AG04450 (cell line): ENCODE measurements at regions of chr2 and their contacts with region 1.

Region 1: GRCh38 chr2:62456721-62457539 is 49.1 kb downstream of the TMEM17 start:
- DNase-seq: no peak
- H3K4me3 ChIP-seq: peak overlapping the region; percentile 67
- H3K27ac ChIP-seq: peak overlapping the region; percentile 52
- H3K27me3 ChIP-seq: peaks cover 3% of the 10 kb centered on the region
- CTCF ChIP-seq: peak; percentile 84

Region 2: GRCh38 chr2:62467475-62468321 is 10.8 kb after region 1 on chr2:
- CTCF ChIA-PET with region 1: interaction called, 21 read pairs
- POLR2A ChIA-PET with region 1: no interaction called
- DNase-seq: no peak
- H3K4me3 ChIP-seq: no peak overlapping the region
- H3K27ac ChIP-seq: no peak overlapping the region
- H3K27me3 ChIP-seq: peaks cover 3% of the 10 kb centered on the region
- CTCF ChIP-seq: 0 out of 2 replicates have a peak, but pooled peaks have one; percentile 8

Region 3: GRCh38 chr2:62663920-62664795 is 207.2 kb after region 1 on chr2:
- CTCF ChIA-PET with region 1: interaction called, 10 read pairs
- POLR2A ChIA-PET with region 1: interaction called, 11 read pairs
- DNase-seq: peak; percentile 43
- H3K4me3 ChIP-seq: no peak overlapping the region
- H3K27ac ChIP-seq: no peak overlapping the region
- H3K27me3 ChIP-seq: no peaks in the 10 kb centered on the region
- CTCF ChIP-seq: no peak

Region 4: GRCh38 chr2:62774555-62775366 is 317.8 kb after region 1 on chr2:
- CTCF ChIA-PET with region 1: interaction called, 291 read pairs
- POLR2A ChIA-PET with region 1: interaction called, 3 read pairs
- DNase-seq: no peak
- H3K4me3 ChIP-seq: no peak overlapping the region
- H3K27ac ChIP-seq: no peak overlapping the region
- H3K27me3 ChIP-seq: no peaks in the 10 kb centered on the region
- CTCF ChIP-seq: peak; percentile 73